ENCODE measurements at regions of chr14 and their contacts with region 1.

Region 1: GRCh38 chr14:20413045-20413799 is at the start of gene TEP1:
- DNase-seq: peak; percentile 47 to 81 (median 66)
- ATAC-seq: peak; percentile 72
- H3K4me3 ChIP-seq: peak within 1 kb of the TSS; percentile 96
- H3K4me3 Mint-ChIP-seq: peak within 1 kb of the TSS; percentile 98
- H3K27ac ChIP-seq: peak within 1 kb of the TSS; percentile 80 to 90
- H3K27ac Mint-ChIP-seq: peak within 1 kb of the TSS; percentile 80
- H3K4me1 ChIP-seq: peaks cover 19% of the 10 kb centered on the region
- H3K4me1 Mint-ChIP-seq: peaks cover 49% of the 10 kb centered on the region
- H3K27me3 ChIP-seq: no peaks in the 10 kb centered on the region
- H3K27me3 Mint-ChIP-seq: no peaks in the 10 kb centered on the region
- CTCF ChIP-seq: no peak
- total RNA-seq, gene TEP1: 14.3 to 17.4 TPM

Region 2: DNA sequence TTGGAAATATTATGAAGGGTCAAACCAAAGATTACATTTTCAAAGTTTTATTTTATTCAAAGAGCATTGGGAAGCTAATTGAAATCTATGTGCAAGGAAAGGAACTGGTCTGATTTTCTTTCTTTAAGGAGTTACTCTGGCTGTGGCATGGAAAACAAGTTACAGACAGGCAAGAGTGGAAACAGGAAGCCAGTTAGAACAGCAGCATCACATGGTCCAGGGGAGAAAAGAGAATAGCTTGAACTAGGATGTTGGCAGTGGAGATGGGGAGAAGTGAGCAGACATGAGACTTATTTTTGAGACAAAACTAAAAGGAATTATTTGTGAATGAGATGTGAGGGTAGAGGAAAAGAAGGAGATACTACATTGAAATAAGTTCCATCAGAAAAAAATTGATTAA is 219.1 kb before region 1 on chr14:
- CTCF ChIA-PET with region 1: no interaction called
- POLR2A ChIA-PET with region 1: no interaction called
- intact Hi-C with region 1: no loop called
- DNase-seq: no peak
- ATAC-seq: no peak
- H3K4me3 ChIP-seq: no peak overlapping the region
- H3K4me3 Mint-ChIP-seq: no peak overlapping the region
- H3K27ac ChIP-seq: no peak overlapping the region
- H3K27ac Mint-ChIP-seq: no peak overlapping the region
- H3K4me1 ChIP-seq: no peaks in the 10 kb centered on the region
- H3K4me1 Mint-ChIP-seq: no peaks in the 10 kb centered on the region
- H3K27me3 ChIP-seq: no peaks in the 10 kb centered on the region
- H3K27me3 Mint-ChIP-seq: peaks cover 21% of the 10 kb centered on the region
- CTCF ChIP-seq: no peak

Region 3: DNA sequence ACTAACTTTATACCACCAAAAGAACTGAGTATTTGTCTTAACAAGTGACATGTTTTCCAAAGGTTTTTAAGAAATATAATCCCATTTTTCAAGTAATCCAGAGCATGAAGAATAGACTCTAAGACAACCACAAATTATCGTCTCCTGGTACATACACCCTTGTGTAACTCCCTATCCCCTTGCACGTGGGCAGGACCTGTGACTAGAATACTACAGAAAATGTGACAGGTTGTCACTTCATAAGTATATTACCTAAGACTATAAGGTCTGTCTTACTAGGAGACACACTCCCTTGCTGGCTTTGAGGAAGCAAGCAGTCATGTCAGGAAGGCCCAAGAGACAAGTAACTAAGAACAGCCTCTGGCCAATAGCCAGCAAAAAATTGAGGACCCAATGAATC is 99.2 kb before region 1 on chr14:
- CTCF ChIA-PET with region 1: no interaction called
- POLR2A ChIA-PET with region 1: no interaction called
- intact Hi-C with region 1: no loop called
- DNase-seq: no peak
- ATAC-seq: no peak
- H3K4me3 ChIP-seq: no peak overlapping the region
- H3K4me3 Mint-ChIP-seq: no peak overlapping the region
- H3K27ac ChIP-seq: no peak overlapping the region
- H3K27ac Mint-ChIP-seq: no peak overlapping the region
- H3K4me1 ChIP-seq: no peaks in the 10 kb centered on the region
- H3K4me1 Mint-ChIP-seq: no peaks in the 10 kb centered on the region
- H3K27me3 ChIP-seq: no peaks in the 10 kb centered on the region
- H3K27me3 Mint-ChIP-seq: no peaks in the 10 kb centered on the region
- CTCF ChIP-seq: no peak

Region 4: DNA sequence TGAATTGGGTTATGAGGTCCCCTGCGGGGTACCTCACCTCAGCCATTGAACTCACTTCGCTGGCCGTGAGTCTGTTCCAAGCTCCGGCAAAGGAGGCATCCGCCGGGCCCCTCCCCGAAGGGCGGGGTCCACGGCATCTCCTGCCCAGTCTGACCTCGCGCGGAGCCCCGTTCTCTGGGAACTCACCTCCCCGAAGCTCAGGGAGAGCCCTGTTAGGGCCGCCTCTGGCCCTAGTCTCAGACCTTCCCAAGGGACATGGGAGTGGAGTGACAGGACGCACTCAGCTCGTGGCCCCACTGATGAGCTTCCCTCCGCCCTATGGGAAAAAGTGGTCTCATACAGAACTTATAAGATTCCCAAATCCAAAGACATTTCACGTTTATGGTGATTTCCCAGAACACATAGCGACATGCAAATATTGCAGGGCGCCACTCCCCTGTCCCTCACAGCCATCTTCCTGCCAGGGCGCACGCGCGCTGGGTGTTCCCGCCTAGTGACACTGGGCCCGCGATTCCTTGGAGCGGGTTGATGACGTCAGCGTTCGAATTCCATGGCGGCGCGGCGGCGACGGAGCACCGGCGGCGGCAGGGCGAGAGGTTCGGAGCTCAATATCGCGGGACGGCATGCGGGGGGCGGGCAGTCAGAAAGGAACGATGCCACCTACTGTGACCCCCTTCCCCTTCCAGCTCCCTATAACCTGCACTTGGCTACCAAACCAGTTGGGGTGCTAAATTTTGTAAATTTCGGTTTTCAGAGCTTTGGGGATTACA is 69.9 kb before region 1 on chr14 and contains the start of gene PARP2:
- CTCF ChIA-PET with region 1: interaction called, 4 read pairs
- POLR2A ChIA-PET with region 1: interaction called, 19 read pairs
- intact Hi-C with region 1: loop called (anchors 5 kb)
- DNase-seq: peak; percentile 70 to 97 (median 82)
- ATAC-seq: peak; percentile 81
- H3K4me3 ChIP-seq: peak within 1 kb of the TSS; percentile 83
- H3K4me3 Mint-ChIP-seq: peak within 1 kb of the TSS; percentile 99
- H3K27ac ChIP-seq: peak within 1 kb of the TSS; percentile 92 to 95
- H3K27ac Mint-ChIP-seq: peak within 1 kb of the TSS; percentile 97
- H3K4me1 ChIP-seq: no peaks in the 10 kb centered on the region
- H3K4me1 Mint-ChIP-seq: peaks cover 11% of the 10 kb centered on the region
- H3K27me3 ChIP-seq: no peaks in the 10 kb centered on the region
- H3K27me3 Mint-ChIP-seq: no peaks in the 10 kb centered on the region
- CTCF ChIP-seq: no peak
- total RNA-seq, gene PARP2: 16.3 to 20.4 TPM

Region 5: GRCh38 chr14:20350282-20350681 is 62.9 kb before region 1 on chr14:
- CTCF ChIA-PET with region 1: no interaction called
- POLR2A ChIA-PET with region 1: no interaction called
- intact Hi-C with region 1: loop called in 1 of 2 experiments (anchors 5 kb)
- DNase-seq: no peak
- ATAC-seq: no peak
- H3K4me3 ChIP-seq: no peak overlapping the region
- H3K4me3 Mint-ChIP-seq: no peak overlapping the region
- H3K27ac ChIP-seq: no peak overlapping the region
- H3K27ac Mint-ChIP-seq: no peak overlapping the region
- H3K4me1 ChIP-seq: no peaks in the 10 kb centered on the region
- H3K4me1 Mint-ChIP-seq: no peaks in the 10 kb centered on the region
- H3K27me3 ChIP-seq: no peaks in the 10 kb centered on the region
- H3K27me3 Mint-ChIP-seq: no peaks in the 10 kb centered on the region
- CTCF ChIP-seq: no peak

Region 6: DNA sequence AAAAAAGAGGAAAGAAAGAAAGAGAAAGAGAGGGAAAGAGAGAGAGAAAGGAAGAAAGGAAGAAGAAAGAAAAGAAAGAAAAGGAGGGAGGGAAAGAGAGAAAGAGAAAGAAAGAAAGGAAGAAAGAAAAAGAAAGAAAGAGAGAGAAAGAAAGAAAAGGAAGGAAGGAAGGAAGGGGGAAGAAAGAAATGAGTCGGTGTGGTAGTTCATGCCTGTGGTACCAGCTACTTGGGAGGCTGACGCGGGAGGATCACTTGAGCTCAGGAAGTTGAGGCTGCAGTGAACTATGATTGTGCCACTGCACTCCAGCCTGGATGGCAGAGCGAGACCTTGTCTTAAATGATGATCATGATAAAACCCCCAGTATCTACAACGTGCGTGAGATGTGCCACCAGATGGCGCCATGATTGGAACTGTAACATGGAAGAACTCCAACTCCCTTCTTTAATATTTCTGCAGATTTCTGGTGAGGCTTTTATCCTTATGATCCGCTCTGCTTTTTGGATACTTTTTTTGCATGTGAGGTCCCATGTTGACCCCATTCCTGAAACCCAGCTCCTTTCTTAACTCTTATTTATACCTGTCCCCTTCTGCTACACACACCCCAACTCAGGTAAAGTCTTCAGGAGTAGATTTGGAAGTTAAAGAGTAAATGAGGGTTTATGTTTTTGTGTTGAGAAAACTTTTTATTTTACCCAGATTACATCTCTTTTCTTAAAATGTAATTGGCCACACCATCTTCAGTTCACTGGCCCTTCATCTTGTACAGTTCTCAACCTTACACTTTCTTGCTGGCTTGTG is 117.7 kb after region 1 on chr14:
- CTCF ChIA-PET with region 1: interaction called, 3 read pairs
- POLR2A ChIA-PET with region 1: no interaction called
- intact Hi-C with region 1: loop called in 1 of 2 experiments (anchors 5 kb)
- DNase-seq: peak; percentile 51 to 86 (median 64)
- ATAC-seq: peak; percentile 67
- H3K4me3 ChIP-seq: no peak overlapping the region
- H3K4me3 Mint-ChIP-seq: no peak overlapping the region
- H3K27ac ChIP-seq: no peak overlapping the region
- H3K27ac Mint-ChIP-seq: no peak overlapping the region
- H3K4me1 ChIP-seq: peaks cover 3% of the 10 kb centered on the region
- H3K4me1 Mint-ChIP-seq: peaks cover 7% of the 10 kb centered on the region
- H3K27me3 ChIP-seq: no peaks in the 10 kb centered on the region
- H3K27me3 Mint-ChIP-seq: peaks cover 5% of the 10 kb centered on the region
- CTCF ChIP-seq: peak; percentile 70

Region 7: DNA sequence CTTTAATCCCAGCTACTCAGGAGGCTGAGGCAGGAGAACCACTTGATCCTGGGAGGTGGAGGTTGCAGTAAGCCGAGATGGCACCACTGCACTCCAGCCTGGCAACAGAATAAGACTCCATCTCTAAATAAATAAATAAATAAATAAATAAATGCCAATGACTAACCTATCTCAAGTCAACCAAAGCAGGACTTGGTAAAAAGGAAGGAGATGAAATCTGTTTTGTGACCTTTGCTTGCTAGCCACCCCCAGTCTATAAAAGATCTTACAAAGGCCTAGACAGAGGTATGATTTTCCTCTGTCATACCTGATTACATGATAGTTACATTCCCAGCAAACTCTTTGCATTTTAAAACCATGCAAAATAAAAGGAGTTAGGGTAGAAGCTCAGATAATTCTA is 563.1 kb after region 1 on chr14:
- CTCF ChIA-PET with region 1: no interaction called
- POLR2A ChIA-PET with region 1: no interaction called
- intact Hi-C with region 1: no loop called
- DNase-seq: no peak
- ATAC-seq: no peak
- H3K4me3 ChIP-seq: no peak overlapping the region
- H3K4me3 Mint-ChIP-seq: no peak overlapping the region
- H3K27ac ChIP-seq: no peak overlapping the region
- H3K27ac Mint-ChIP-seq: no peak overlapping the region
- H3K4me1 ChIP-seq: peaks cover 6% of the 10 kb centered on the region
- H3K4me1 Mint-ChIP-seq: peaks cover 5% of the 10 kb centered on the region
- H3K27me3 ChIP-seq: peaks cover 0 to 4% of the 10 kb centered on the region in 2 experiments
- H3K27me3 Mint-ChIP-seq: peaks cover 20% of the 10 kb centered on the region
- CTCF ChIP-seq: no peak